ENCODE measurements at regions of chr17 and their contacts with region 1.

Region 1: GRCh38 chr17:28763804-28764266 is 20.0 kb downstream of the TRAF4 start:
- DNase-seq: peak; percentile 51
- H3K4me3 ChIP-seq: no peak overlapping the region
- H3K27ac ChIP-seq: no peak overlapping the region
- H3K27me3 ChIP-seq: no peaks in the 10 kb centered on the region
- CTCF ChIP-seq: peak; percentile 89

Region 2: DNA sequence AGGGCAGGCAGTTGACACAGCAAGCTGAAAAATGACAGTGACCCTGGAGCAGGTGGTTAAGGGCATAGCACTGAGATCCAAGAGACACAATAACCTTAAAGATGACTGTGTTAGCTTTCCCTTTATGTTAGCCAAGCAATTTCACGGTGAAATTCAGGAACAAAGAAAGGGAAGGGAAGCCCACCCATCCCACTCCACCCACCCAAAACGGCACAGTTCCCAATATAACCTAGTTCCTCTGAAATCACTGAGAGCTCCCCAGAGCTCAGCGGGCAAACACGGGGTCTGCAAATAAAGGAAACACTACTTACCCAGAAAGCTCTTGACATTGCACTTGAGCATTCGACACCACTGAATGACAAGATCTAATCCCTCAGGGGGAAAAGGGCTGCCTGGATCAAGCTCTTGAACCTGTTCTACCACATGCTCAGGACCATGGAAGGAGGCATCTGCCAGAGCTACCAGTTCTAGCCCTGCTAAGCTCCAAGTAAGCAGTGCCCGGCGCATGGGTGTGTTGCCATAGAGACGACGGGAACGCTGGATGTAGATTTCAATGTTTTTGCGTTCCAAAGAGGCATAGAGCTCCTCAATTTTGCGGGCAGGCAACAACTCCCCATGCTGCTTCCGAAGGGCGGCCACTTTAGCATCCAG is 129.5 kb before region 1 on chr17:
- CTCF ChIA-PET with region 1: no interaction called
- POLR2A ChIA-PET with region 1: no interaction called
- DNase-seq: no peak
- H3K4me3 ChIP-seq: no peak overlapping the region
- H3K27ac ChIP-seq: no peak overlapping the region
- H3K27me3 ChIP-seq: no peaks in the 10 kb centered on the region
- CTCF ChIP-seq: no peak

Region 3: GRCh38 chr17:28644985-28645939 is 118.6 kb before region 1 on chr17 and contains the start of gene BLTP2:
- CTCF ChIA-PET with region 1: no interaction called
- POLR2A ChIA-PET with region 1: no interaction called
- DNase-seq: peak; percentile 84
- H3K4me3 ChIP-seq: peak within 1 kb of the TSS; percentile 91
- H3K27ac ChIP-seq: peak within 1 kb of the TSS; percentile 52
- H3K27me3 ChIP-seq: no peaks in the 10 kb centered on the region
- CTCF ChIP-seq: no peak
- polyA plus RNA-seq, gene BLTP2: 141 and 156 TPM in 2 replicates

Region 4: DNA sequence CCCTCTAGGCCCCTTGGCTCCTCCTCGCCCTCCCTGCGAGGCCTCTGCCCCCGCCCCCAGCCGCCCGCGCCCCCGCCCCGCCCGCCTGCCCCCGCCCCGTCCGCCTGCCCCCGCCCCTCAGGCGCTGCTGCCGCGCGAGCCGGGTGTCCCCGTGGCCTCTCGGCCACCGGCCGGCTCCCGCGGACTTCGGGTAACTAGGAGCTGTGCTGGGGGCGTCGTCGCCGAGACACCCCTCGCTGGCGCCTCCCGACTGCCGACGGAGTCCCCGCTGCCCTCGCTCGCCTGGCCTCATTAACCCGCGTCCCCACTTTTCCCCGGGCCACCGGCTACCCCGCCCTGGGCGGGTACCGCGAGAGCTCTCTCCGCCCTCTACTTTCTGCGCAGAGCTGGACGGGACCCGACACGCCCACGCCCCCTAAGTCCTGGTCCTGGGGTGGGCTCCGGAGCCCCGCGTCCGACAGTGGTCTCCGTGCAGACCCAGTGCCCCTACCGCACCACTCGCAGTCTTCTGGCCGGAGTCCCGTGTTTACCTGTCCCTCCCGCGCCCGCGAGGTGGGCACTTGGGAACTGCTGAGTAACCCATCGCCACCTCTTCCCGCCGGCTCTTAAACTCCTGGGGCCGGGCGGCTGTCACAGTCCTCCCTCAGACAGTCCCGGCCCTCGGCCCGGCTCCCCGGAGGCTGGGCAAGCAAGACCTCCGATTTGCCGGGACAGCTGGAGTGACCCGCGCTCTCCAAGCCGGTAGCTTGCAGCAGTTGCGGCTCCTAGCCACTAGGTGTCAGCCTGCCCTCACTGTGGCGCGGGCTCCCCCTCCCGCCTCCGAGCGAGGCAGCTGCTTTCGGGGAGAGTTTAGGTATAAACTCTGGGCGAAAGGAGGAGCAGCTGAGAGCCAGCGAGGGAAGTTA is 37.4 kb before region 1 on chr17 and contains the start of gene TLCD1:
- CTCF ChIA-PET with region 1: interaction called, 33 read pairs
- POLR2A ChIA-PET with region 1: interaction called, 9 read pairs
- DNase-seq: peak; percentile 84
- H3K4me3 ChIP-seq: peak within 1 kb of the TSS; percentile 71
- H3K27ac ChIP-seq: peak within 1 kb of the TSS; percentile 77
- H3K27me3 ChIP-seq: no peaks in the 10 kb centered on the region
- CTCF ChIP-seq: peak; percentile 98
- polyA plus RNA-seq, gene TLCD1: 11.8 and 13.1 TPM in 2 replicates

Region 5: DNA sequence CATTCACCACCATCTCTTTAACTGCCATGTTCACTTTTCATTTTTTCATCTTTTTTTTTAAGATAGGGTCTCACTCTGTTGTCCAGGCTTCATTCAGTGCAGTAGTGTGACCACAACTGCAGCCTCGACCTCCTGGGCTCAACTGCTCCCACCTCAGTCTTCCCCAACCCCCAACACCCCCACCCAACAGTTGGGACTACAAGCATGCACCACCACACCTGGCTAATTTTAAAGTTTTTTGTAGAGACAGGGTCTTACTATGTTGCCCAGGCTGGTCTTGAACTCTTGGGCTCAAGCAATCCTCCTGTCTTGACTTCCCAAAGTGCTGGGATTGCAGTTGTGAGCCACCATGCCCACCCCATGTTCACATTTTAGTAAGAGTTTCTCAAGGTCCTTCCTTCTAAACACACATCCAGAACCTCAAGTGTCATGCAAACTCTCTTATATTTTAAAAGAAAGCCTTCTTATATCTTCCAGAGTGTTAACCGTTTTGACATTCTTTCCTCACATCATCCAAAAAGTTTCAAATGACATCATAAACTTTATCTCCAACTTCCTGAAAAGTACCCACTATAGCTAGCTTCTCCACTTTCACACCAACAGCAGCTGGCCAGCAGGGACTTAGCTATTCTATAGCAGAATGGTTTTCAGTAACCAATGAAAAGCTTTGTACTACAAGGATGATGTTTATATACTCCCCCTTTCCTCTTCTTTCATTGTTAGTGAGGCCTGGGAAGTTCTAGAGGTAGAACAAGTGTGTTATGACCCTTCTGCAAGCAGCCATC is 29.2 kb after region 1 on chr17:
- CTCF ChIA-PET with region 1: interaction called, 62 read pairs
- POLR2A ChIA-PET with region 1: no interaction called
- DNase-seq: no peak
- H3K4me3 ChIP-seq: no peak overlapping the region
- H3K27ac ChIP-seq: no peak overlapping the region
- H3K27me3 ChIP-seq: no peaks in the 10 kb centered on the region
- CTCF ChIP-seq: no peak

Region 6: GRCh38 chr17:28842282-28843012 is 78.6 kb after region 1 on chr17 and contains the start of gene FAM222B:
- CTCF ChIA-PET with region 1: interaction called, 22 read pairs
- POLR2A ChIA-PET with region 1: interaction called, 4 read pairs
- DNase-seq: peak; percentile 51
- H3K4me3 ChIP-seq: peak within 1 kb of the TSS; percentile 97
- H3K27ac ChIP-seq: peak within 1 kb of the TSS; percentile 57
- H3K27me3 ChIP-seq: no peaks in the 10 kb centered on the region
- CTCF ChIP-seq: no peak
- polyA plus RNA-seq, gene FAM222B: 8.3 and 11.0 TPM in 2 replicates

Region 7: DNA sequence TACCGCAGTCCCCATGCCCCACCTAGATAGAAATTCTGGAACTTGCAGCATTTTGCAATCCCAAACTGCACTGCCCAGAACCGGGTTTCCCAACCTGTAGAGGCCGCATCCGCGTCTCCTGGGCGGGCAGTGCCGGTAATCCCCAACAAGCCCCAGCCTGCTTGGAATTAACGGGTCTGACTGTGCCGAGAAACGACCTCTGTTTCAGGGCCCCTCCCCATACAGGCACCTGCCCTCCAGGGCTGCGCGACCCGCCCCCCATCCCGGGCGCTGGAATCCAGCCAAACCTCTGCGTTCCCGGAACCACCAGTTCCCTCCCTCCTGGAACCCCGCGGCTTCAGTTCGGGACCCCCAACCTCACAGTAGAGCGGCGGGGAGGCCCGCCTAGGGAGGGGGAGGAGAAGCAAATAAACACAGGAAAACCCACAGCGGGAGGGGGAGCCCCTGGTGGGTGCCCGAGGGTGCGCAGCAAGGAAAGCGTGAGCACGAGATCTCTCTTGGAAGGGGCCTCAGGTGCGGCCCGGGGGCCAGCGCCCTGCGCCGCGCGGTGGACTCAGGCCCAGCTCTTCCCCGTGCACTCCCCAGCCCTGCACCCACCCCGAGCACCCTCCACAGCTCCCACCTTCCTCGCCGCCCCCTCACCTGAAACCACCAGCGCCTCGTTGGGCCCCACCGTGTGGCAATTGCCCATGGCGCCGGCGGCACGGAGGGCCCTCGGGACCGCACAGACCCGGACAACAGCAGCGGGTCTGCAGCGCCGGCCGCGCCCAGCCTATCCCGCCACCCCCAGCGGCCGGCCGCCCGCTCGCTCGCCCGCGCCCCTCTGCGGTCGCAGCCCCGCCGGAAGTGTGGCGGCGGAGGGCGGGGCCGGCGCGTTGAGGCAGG is 133.3 kb after region 1 on chr17 and contains the start of gene FLOT2:
- CTCF ChIA-PET with region 1: interaction called, 46 read pairs
- POLR2A ChIA-PET with region 1: no interaction called
- DNase-seq: no peak
- H3K4me3 ChIP-seq: peak within 1 kb of the TSS; percentile 83
- H3K27ac ChIP-seq: peak within 1 kb of the TSS; percentile 11
- H3K27me3 ChIP-seq: no peaks in the 10 kb centered on the region
- CTCF ChIP-seq: peak; percentile 37
- polyA plus RNA-seq, gene FLOT2: 80.5 and 83.9 TPM in 2 replicates

Region 8: DNA sequence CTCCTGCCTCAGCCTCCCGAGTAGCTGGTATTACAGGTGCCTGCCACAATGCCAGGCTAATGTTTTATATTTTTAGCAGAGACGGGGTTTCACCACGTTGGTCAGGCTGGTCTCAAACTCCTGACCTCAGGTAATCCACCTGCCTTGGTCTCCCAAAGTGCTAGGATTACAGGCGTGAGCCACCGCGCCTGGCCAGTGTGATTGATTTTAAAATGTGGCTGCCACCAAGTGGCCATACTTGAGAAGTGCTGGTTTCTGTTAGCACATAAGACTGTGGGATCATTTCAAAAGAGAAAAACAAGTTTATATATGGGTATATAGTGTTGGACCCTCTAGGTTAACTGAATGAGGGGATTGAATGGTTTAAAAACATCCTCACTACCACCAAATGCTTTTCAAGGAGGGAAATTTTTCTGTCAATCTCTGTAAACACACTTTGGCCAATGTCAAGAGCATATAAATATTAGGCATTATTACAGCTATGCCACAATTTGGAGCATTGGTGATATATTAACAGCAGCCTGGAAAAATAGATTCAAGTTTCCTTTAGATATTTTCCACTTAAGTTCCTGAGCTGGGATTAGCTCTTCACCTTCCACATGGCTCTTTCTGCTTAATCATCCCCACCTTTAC is 152.6 kb after region 1 on chr17:
- CTCF ChIA-PET with region 1: interaction called, 13 read pairs
- POLR2A ChIA-PET with region 1: no interaction called
- DNase-seq: no peak
- H3K4me3 ChIP-seq: no peak overlapping the region
- H3K27ac ChIP-seq: no peak overlapping the region
- H3K27me3 ChIP-seq: no peaks in the 10 kb centered on the region
- CTCF ChIP-seq: peak; percentile 54

Region 9: GRCh38 chr17:28951991-28952975 is 188.4 kb after region 1 on chr17:
- CTCF ChIA-PET with region 1: interaction called, 23 read pairs
- POLR2A ChIA-PET with region 1: interaction called, 10 read pairs
- DNase-seq: peak; percentile 99
- H3K4me3 ChIP-seq: peak overlapping the region; percentile 77
- H3K27ac ChIP-seq: peak overlapping the region; percentile 98
- H3K27me3 ChIP-seq: no peaks in the 10 kb centered on the region
- CTCF ChIP-seq: no peak